PC-9 (cell line): ENCODE measurements at regions of chr9 and their contacts with region 1.

Region 1: GRCh38 chr9:98747476-98747875 is 38.7 kb upstream of the GABBR2 start:
- DNase-seq: no peak
- H3K4me3 ChIP-seq: no peak overlapping the region
- H3K27ac ChIP-seq: no peak overlapping the region
- H3K4me1 ChIP-seq: no peaks in the 10 kb centered on the region
- H3K27me3 ChIP-seq: no peaks in the 10 kb centered on the region
- CTCF ChIP-seq: no peak

Region 2: GRCh38 chr9:98767907-98768306 is 20.4 kb after region 1 on chr9:
- CTCF ChIA-PET with region 1: no interaction called
- POLR2A ChIA-PET with region 1: no interaction called
- intact Hi-C with region 1: loop called (anchors 1 kb)
- DNase-seq: no peak
- H3K4me3 ChIP-seq: no peak overlapping the region
- H3K27ac ChIP-seq: no peak overlapping the region
- H3K4me1 ChIP-seq: peaks cover 13% of the 10 kb centered on the region; the same call in 1 of the 2 replicates
- H3K27me3 ChIP-seq: no peaks in the 10 kb centered on the region
- CTCF ChIP-seq: no peak